IMR-90 (cell line): ENCODE measurements at regions of chr7 and their contacts with region 1.

Region 1: GRCh38 chr7:65722345-65722792 is 150.5 kb upstream of the VKORC1L1 start:
- DNase-seq: peak; percentile 11
- ATAC-seq: no peak; the same call in 1 of the 2 replicates
- H3K4me3 ChIP-seq: no peak overlapping the region
- H3K27ac ChIP-seq: no peak overlapping the region
- H3K4me1 ChIP-seq: no peaks in the 10 kb centered on the region
- H3K27me3 ChIP-seq: no peaks in the 10 kb centered on the region
- CTCF ChIP-seq: peak; percentile 69
- POLR2A ChIP-seq: no peak
- RAD21 ChIP-seq: peak; percentile 82

Region 2: GRCh38 chr7:66013916-66014315 is 291.5 kb after region 1 on chr7:
- CTCF ChIA-PET with region 1: no interaction called
- POLR2A ChIA-PET with region 1: no interaction called
- dilution Hi-C with region 1: no loop called
- in situ Hi-C with region 1: no loop called
- intact Hi-C with region 1: loop called (anchors 1 kb)
- DNase-seq: peak; percentile 62
- ATAC-seq: peak; percentile 96
- H3K4me3 ChIP-seq: no peak overlapping the region
- H3K27ac ChIP-seq: no peak overlapping the region
- H3K4me1 ChIP-seq: 0 out of 2 replicates have a peak, but pooled peaks cover 4% of the 10 kb centered on the region
- H3K27me3 ChIP-seq: no peaks in the 10 kb centered on the region
- CTCF ChIP-seq: peak; percentile 69
- POLR2A ChIP-seq: no peak
- RAD21 ChIP-seq: peak; percentile 74